Sigmoid colon (tissue), 7 donors: ENCODE measurements at regions of chr15 and their contacts with region 1.

Region 1: GRCh38 chr15:45522328-45523160 is at the start of gene SLC30A4:
- DNase-seq: peak; percentile 86
- H3K4me3 ChIP-seq: peak within 1 kb of the TSS; percentile 63 to 82 (median 77)
- H3K27ac ChIP-seq: peak within 1 kb of the TSS; percentile 89 to 92 (median 90)
- H3K4me1 ChIP-seq: peaks cover 0 to 28% (median 21%) of the 10 kb centered on the region in 4 donors
- H3K27me3 ChIP-seq: no peaks in the 10 kb centered on the region
- CTCF ChIP-seq: peak in 2 of 4 experiments; percentile 25 to 43
- EP300 ChIP-seq: no peak
- POLR2A ChIP-seq: no peak
- total RNA-seq, gene SLC30A4: 9.2 to 11.6 (median 9.6) TPM

Region 2: GRCh38 chr15:45510758-45511280 is 11.7 kb before region 1 on chr15:
- intact Hi-C with region 1: no loop called
- DNase-seq: no peak
- H3K4me3 ChIP-seq: no peak overlapping the region
- H3K27ac ChIP-seq: no peak overlapping the region
- H3K4me1 ChIP-seq: no peaks in the 10 kb centered on the region
- H3K27me3 ChIP-seq: no peaks in the 10 kb centered on the region
- CTCF ChIP-seq: no peak
- EP300 ChIP-seq: no peak
- POLR2A ChIP-seq: no peak

Region 3: DNA sequence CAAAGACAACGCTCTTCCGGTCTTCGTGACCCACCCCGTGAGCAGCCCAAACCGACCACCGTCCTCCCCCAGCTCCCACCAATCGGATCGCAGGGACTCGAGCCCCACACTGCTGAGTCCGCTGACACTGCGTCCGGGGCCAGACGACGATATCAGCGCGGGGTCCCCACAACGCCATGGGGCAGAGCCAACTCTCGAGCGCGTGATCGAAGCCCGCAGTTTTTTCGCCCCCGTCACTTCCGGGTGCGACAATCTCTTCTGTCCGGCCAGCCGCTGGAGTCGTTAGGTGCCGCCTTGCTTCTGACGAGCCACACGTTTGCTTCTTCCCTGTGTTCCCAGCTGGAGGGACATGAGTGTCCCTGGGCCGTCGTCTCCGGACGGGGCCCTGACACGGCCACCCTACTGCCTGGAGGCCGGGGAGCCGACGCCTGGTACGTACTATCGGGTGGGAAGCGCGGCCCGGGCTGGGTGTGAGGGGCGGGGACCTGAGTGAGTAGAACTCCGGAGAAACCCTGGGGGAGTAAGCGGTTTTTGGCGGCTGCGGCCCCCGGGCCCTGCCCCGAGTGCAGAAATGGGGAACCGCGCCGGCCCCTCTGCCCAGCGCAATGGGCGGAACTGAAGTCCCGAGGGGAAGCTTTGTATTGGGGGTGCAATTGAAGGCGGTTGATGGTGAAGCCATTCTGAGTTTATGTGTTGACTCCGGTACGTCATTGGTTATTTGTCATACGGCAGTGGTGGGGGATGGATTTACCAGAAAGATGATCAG is 64.7 kb after region 1 on chr15 and contains the start of gene BLOC1S6:
- intact Hi-C with region 1: loop called (anchors 1 kb)
- DNase-seq: peak; percentile 95
- H3K4me3 ChIP-seq: peak within 1 kb of the TSS; percentile 79 to 96 (median 88)
- H3K27ac ChIP-seq: peak within 1 kb of the TSS; percentile 94 to 99 (median 99)
- H3K4me1 ChIP-seq: peaks cover 0 to 50% (median 33%) of the 10 kb centered on the region in 4 donors
- H3K27me3 ChIP-seq: no peaks in the 10 kb centered on the region
- CTCF ChIP-seq: no peak
- EP300 ChIP-seq: peak in 1 of 4 donors; percentile 32
- POLR2A ChIP-seq: peak; percentile 63 to 66
- total RNA-seq, gene BLOC1S6: 40.2 to 89.1 (median 74.7) TPM

Region 4: GRCh38 chr15:45611305-45611704 is 88.8 kb after region 1 on chr15:
- intact Hi-C with region 1: loop called (anchors 1 kb)
- DNase-seq: no peak
- H3K4me3 ChIP-seq: no peak overlapping the region
- H3K27ac ChIP-seq: no peak overlapping the region
- H3K4me1 ChIP-seq: peaks cover 0 to 6% (median 0%) of the 10 kb centered on the region in 4 donors
- H3K27me3 ChIP-seq: no peaks in the 10 kb centered on the region
- CTCF ChIP-seq: no peak
- EP300 ChIP-seq: no peak
- POLR2A ChIP-seq: no peak